Left colon (tissue), 2 donors: ENCODE measurements at regions of chr2 and their contacts with region 1.

Region 1: DNA sequence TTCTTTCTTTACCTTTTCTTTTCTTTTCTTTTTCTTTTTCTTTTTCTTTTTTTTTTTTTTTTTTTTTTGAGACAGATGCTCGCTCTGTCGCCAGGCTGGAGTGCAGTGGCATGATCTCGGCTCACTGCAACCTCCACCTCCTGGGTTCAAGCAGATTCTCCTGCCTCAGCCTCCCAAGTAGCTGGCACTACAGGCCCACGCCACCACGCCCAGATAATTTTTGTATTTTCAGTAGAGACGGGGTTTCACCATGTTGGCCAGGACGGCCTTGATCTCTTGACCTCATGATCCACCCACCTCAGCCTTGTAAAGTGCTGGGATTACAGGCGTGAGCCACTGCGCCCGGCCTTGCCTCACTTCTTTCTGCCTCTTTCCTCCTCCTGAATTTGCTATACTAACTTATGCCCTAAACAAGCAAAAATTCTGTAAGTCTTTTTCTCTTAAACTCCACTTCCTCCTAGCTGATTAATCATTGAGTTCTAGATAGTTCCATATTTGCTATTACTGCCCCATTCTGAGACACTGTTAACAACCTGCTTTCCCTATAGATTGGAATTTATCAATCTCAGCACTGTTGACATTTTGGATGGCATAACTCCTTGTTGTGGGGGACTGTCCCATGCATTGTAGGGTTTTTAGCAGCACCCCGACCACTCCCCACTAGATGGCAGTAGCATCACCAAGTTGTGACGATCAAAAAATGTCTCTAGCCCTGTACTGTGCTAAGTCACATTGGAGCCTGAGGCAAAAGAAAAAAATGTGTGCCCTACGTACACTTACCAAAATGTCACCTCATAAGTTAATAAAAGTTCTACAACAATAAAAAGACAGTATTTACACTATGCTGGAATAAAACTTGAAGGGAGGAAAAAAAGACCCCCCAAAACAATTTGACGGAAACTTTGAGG is 16.4 kb upstream of the THADA start:
- DNase-seq: peak; percentile 44 to 77
- ATAC-seq: peak; percentile 88

Region 2: DNA sequence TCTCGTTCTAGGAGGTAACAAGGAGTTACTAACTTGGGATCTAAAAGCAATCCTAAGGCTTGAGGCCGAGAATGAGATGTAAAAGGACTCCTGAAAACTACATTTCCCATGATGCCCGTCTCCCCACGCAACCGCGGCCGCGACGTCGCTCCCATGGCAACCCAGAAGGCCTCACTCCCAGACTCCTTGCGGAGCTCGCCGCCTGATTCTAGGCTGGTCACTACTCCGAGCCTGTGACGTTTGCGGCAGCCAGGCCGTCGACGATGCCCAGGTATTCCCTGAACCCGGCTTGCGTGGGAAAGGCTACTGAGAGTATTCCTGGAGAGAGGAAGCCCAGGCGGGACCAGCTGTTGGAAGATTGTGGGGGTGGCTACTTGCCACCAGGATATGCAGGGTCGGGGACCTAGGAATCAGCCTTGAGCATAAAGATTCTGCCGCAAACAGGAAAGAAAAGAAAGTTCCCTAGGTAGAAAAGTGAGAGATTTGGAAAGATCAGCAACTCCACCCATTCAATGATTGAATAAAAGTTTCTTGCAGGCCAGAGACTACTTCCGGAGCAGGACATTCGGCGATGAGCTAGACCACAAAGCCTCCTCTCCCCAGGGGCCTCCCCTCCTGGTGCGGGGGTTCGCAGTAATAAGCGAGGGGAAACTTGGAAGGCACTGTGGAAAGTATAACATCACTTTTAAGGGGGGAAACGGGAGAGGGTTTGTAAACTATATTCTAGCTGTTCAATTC is 161.8 kb after region 1 on chr2 and contains the start of gene DYNC2LI1:
- intact Hi-C with region 1: no loop called
- DNase-seq: peak; percentile 83 to 92
- ATAC-seq: peak; percentile 99
- total RNA-seq, gene DYNC2LI1: 6.9 to 19.9 TPM

Region 3: DNA sequence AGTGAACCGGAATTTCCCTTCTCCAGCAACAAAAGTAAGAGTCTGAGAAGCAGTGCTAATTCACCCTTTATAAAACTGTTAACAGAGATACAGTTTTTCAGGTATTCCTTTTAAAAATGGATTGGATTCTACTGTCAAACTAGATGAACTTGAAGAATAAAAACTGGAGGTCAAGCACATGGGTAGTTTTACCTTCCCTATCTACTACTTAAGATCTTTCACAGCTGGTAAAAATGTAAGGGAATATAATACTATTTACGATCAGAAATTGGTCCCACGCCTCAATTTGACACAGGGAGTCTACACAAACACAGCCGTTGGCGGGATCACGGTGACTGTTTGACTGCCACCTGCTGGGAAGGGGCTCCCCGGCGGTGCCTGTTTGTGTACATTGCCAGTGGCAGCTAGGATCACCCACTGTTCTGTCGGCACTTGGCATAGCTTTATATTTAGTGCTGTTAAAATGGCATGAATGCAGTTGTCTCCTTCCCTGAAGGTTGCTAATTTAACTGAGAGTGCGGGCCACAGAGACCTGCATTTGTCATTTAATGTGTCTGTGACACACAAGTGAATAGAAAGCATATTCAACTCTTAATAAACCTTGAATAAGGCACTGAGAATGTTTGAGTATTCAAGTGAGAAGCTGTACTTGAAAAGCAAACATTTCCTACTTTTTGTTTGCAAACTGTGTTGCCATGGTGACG is 286.0 kb after region 1 on chr2:
- intact Hi-C with region 1: loop called in 1 of 2 experiments (anchors 10 kb)
- DNase-seq: peak in 1 of 2 donors; percentile 64
- ATAC-seq: peak; percentile 96